Dorsolateral prefrontal cortex (tissue), 120 donors: ENCODE measurements at regions of chr20 and their contacts with region 1.

Region 1: DNA sequence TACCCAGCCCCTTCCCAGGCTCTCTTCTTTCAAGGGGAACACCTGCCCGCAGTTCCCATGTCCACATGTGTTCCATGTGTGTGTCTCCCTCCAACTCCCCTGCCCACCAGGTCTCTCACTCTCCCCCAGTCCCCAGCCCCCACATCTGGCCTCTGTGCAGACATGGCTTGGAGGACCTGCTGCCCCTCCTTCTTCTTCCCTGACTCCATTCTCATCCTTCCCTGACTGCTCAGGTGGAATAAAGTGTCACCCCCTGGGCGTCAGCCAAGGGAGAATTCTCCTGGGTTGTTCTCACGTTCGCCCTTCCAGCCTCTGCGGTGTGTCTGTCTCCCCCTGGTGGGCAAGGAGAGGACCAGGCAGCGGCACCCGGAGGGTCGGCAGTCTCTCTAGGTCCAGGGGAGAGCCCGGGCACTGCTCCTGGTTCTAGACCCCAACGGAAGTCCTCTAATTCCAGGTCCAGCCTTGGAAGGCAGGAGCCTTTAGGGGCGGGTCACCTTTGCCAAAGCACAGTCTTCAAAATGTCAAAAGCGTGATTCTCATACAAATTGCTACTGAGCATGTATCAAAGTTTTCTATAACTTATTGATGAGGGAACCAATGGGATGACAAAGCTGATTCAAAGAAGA is 50.5 kb downstream of the EBF4 start:
- DNase-seq: peak in 2 of 10 donors; percentile 31 to 56
- H3K4me3 ChIP-seq: no peak overlapping the region
- H3K27ac ChIP-seq: no peak overlapping the region
- H3K27me3 ChIP-seq: peaks cover 0 to 6% (median 0%) of the 10 kb centered on the region in 45 donors
- CTCF ChIP-seq: peak in 55 of 56 donors; percentile 23 to 81 (median 69)

Region 2: DNA sequence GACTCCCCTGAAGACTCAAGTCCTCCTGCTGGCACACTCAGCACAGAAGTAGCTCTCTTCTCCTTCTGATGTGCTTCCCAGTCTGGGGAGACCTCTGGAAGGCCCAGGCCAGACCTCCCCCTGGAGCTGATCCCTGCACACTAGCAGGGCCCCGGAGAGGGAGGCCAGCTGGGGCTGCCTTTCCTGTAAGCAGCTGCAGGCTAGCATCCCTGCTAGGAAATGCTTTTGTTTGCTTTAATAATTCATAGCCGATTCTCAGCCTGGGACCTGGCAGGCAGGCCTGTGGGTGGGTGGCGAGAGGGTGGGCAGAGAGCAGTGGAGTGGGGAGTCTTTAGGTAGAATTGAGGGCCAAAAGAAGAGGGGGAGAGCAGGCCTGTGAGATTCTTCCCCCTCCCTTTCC is 45.3 kb before region 1 on chr20:
- intact Hi-C with region 1: loop called in 1 of 2 experiments (anchors 5 kb)
- DNase-seq: peak in 1 of 10 donors; percentile 30
- H3K4me3 ChIP-seq: no peak overlapping the region
- H3K27ac ChIP-seq: peak overlapping the region in 4 of 59 donors; percentile 20 to 62 (median 38)
- H3K27me3 ChIP-seq: peaks cover 0 to 14% (median 0%) of the 10 kb centered on the region in 45 donors
- CTCF ChIP-seq: no peak